SK-N-SH (cell line): ENCODE measurements at regions of chr11 and their contacts with region 1.

Region 1: DNA sequence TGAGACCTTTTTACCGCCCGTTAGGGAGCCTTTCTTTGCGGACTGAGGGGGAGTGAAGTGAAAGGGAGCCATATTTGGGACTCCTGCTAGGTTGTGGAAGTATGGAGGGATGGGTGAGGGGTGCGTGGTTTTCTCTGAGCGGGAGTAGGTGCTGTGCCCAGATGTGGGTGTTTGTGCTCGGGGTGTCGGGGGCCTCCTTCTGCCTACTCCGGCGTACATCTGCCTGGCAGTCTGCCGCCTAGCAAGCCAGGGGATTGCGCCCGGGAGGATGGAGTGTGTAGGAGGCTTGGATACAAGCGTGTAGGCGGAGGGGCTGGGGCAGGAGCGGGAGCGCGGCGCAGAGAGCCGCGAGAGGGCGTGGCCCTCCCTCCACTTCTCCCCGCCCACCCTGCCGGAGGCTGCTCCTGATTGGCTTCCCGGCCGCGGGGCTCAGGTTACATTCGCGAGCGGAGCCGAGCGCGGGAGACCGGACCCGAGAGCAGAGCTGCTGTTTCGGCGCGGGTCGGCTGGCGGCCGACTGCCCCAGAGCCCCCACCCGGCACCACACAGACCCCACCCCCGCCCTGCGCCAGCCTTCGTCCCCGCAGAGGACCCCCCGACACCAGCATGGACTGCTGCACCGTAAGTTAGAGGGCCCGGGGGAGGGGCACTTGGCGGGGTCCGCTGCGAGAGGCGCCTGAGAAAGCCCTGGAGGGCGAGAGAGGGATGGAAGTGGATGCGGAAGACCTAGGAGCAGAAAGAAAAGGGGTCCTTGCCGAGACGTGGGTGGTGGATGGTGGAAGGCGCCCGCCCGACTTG is at the start of gene NRGN:
- DNase-seq: peak; percentile 98
- H3K4me3 ChIP-seq: peak within 1 kb of the TSS; percentile 55 to 69
- H3K27ac ChIP-seq: no peak within 1 kb of the TSS; a peak in 1 of 4 replicates
- H3K4me1 ChIP-seq: peaks cover 0 to 12% of the 10 kb centered on the region in 2 experiments; a peak in 2 of 4 replicates
- H3K27me3 ChIP-seq: no peaks in the 10 kb centered on the region
- CTCF ChIP-seq: no peak
- EP300 ChIP-seq: no peak
- RAD21 ChIP-seq: no peak
- polyA plus RNA-seq, gene NRGN: 3.1 and 6.8 TPM in 2 replicates

Region 2: DNA sequence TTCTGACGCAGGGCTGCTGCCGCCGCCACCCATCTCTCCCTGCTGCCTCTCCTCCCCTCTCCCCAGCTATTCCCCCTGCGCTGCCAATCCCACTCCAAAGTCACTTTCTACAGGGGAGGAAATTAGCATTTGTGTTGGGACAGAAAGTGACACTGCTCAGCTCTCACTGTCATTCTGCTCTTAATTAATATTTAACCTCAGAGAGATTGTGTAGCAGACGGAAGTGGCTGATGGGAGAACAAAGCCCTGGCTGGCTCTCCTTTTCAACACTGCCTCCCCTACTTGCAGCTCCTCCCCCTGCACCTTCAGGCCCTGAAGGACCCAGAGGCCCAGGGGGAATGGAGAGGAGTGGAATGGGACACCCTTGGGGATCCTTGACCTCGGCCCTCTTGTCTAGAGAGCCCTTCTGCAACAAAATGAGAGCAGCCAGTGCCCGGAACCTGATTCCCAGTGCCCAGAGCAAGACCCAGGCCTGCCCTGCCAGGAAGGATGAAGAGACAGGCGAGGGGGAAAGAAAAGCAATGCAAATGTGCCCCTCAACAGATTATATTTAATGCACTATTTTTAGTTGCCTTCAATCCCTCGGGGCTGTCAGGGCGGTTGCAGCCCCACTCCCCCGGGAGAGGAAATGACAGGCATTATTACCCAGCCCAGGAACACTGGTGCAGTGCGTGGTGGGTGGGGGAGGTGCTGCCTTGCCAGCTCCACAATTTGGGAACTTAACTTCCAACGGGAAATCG is 14.5 kb before region 1 on chr11:
- CTCF ChIA-PET with region 1: interaction called, 11 read pairs
- POLR2A ChIA-PET with region 1: no interaction called
- DNase-seq: no peak
- H3K4me3 ChIP-seq: no peak overlapping the region
- H3K27ac ChIP-seq: peak overlapping the region in 1 of 2 experiments; percentile 46; a peak in 1 of 4 replicates
- H3K4me1 ChIP-seq: peaks cover 5 to 22% of the 10 kb centered on the region in 2 experiments; a peak in 2 of 4 replicates
- H3K27me3 ChIP-seq: no peaks in the 10 kb centered on the region
- CTCF ChIP-seq: no peak
- EP300 ChIP-seq: no peak
- RAD21 ChIP-seq: no peak

Region 3: DNA sequence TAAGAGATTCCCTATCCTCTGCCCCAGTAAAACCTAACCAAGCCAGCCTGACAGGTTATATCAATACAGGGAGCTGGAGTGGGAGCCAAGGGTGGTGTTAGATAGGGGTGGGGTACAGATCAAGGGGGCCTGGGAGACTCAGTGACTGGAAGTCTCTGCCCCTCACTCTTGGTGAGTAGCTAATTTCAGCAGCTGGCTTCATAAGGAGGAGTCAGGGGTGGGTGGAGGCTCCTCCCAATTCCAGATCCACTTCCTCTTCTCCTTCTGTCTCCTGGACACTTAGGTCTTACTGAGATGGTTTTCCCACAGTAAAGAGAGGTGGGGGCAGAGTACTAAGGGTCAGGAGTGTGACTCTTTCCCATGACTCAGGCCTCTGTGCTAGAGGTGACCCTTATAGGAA is 13.5 kb after region 1 on chr11:
- CTCF ChIA-PET with region 1: interaction called, 17 read pairs
- POLR2A ChIA-PET with region 1: no interaction called
- DNase-seq: peak; percentile 27
- H3K4me3 ChIP-seq: no peak overlapping the region
- H3K27ac ChIP-seq: no peak overlapping the region
- H3K4me1 ChIP-seq: no peaks in the 10 kb centered on the region; a peak in 1 of 4 replicates
- H3K27me3 ChIP-seq: no peaks in the 10 kb centered on the region
- CTCF ChIP-seq: no peak
- EP300 ChIP-seq: no peak
- RAD21 ChIP-seq: no peak